ENCODE measurements at regions of chr19 and their contacts with region 1.

Region 1: GRCh38 chr19:1039646-1040475 is at the start of gene ABCA7:
- DNase-seq: peak; percentile 99
- H3K4me3 Mint-ChIP-seq: peak within 1 kb of the TSS; percentile 97
- H3K27ac Mint-ChIP-seq: peak within 1 kb of the TSS; percentile 90
- H3K4me1 Mint-ChIP-seq: peaks cover 65% of the 10 kb centered on the region
- H3K27me3 Mint-ChIP-seq: no peaks in the 10 kb centered on the region
- total RNA-seq, gene ABCA7: 92.7 to 95.1 TPM

Region 2: DNA sequence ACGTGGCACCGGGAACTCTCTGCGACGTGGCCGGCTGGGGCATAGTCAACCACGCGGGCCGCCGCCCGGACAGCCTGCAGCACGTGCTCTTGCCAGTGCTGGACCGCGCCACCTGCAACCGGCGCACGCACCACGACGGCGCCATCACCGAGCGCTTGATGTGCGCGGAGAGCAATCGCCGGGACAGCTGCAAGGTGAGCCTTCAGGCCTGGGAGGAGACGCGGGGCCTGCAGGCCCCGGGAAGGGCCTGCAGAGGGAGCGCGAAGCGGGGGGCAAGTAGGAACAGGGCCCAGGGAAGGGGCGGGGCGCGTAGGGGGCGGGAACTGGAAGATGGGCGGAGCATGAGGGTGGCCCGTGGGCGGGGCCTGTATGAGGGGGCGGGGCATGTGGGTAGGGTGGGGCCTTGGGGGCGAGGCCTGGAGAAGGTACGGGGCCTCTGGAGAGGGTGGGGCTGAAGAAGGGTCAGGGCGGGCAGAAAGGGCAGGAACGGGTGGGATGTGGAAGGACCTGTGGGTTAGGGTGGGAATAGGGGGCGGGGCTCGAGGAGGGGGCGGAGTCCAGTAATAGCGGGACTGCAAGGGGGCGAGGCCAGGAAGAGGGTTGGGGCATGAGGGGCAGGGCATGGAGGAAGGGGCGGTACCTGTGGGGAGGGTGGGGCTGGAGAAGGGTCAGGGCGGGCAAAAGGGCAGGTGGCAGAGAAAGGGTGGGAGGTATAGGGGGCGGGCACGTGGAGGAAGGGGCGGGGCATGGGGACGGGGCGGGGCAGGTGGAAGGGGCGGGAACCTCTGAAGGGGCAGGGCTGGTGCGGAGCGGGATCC is 177.9 kb before region 1 on chr19:
- CTCF ChIA-PET with region 1: no interaction called
- POLR2A ChIA-PET with region 1: no interaction called
- DNase-seq: peak; percentile 78
- H3K4me3 Mint-ChIP-seq: no peak overlapping the region
- H3K27ac Mint-ChIP-seq: peak overlapping the region; percentile 55
- H3K4me1 Mint-ChIP-seq: peaks cover 24% of the 10 kb centered on the region
- H3K27me3 Mint-ChIP-seq: peaks cover 12% of the 10 kb centered on the region

Region 3: GRCh38 chr19:1020868-1021425 is 18.9 kb before region 1 on chr19 and contains the start of gene TMEM259:
- CTCF ChIA-PET with region 1: interaction called, 34 read pairs
- POLR2A ChIA-PET with region 1: interaction called, 134 read pairs
- DNase-seq: peak; percentile 98
- H3K4me3 Mint-ChIP-seq: peak within 1 kb of the TSS; percentile 91
- H3K27ac Mint-ChIP-seq: peak within 1 kb of the TSS; percentile 92
- H3K4me1 Mint-ChIP-seq: peaks cover 47% of the 10 kb centered on the region
- H3K27me3 Mint-ChIP-seq: no peaks in the 10 kb centered on the region
- total RNA-seq, gene TMEM259: 181 TPM

Region 4: DNA sequence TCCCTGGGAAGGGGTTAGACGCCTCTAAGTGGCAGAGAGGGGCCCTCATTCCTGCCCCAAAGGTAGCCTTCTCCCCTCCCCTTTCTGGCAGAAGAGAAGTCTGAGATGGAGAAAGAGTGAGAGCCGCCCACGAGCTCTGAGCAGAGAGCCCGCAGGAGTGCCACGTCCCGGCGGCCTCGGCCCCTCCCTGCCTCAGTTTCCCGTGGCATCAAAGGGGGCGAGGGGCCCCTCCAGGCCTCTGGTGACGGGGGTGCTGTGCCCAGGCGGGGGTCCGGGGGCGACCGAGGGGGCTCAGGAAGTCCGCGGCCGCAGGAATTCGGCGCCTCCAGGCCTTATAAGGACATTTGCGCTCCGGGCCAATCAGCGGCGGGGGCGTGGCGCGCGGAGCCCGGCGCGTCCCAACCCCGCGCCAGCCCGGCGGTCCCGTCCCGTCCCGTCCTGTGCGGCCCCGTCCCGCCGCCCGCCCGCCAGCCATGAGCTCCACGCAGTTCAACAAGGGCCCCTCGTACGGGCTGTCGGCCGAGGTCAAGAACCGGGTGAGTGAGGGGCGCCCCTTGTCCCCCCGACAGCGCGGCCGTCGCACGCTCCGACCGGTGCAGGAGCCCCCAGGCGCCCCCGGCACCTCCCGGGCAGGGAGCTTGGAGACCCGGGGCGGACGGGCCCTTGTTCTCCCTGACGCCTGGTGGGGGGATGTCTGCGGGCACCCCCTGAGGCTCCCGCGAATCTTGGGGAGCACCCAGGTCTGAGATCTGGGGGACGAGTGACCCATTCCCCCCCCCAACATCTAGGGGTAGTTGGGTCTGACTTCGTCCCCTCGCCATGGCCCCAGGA is 13.5 kb before region 1 on chr19 and contains the start of gene CNN2:
- CTCF ChIA-PET with region 1: interaction called, 34 read pairs
- POLR2A ChIA-PET with region 1: interaction called, 134 read pairs
- DNase-seq: peak; percentile 78
- H3K4me3 Mint-ChIP-seq: peak within 1 kb of the TSS; percentile 97
- H3K27ac Mint-ChIP-seq: peak within 1 kb of the TSS; percentile 95
- H3K4me1 Mint-ChIP-seq: peaks cover 33% of the 10 kb centered on the region
- H3K27me3 Mint-ChIP-seq: no peaks in the 10 kb centered on the region
- total RNA-seq, gene CNN2: 513 to 519 TPM

Region 5: DNA sequence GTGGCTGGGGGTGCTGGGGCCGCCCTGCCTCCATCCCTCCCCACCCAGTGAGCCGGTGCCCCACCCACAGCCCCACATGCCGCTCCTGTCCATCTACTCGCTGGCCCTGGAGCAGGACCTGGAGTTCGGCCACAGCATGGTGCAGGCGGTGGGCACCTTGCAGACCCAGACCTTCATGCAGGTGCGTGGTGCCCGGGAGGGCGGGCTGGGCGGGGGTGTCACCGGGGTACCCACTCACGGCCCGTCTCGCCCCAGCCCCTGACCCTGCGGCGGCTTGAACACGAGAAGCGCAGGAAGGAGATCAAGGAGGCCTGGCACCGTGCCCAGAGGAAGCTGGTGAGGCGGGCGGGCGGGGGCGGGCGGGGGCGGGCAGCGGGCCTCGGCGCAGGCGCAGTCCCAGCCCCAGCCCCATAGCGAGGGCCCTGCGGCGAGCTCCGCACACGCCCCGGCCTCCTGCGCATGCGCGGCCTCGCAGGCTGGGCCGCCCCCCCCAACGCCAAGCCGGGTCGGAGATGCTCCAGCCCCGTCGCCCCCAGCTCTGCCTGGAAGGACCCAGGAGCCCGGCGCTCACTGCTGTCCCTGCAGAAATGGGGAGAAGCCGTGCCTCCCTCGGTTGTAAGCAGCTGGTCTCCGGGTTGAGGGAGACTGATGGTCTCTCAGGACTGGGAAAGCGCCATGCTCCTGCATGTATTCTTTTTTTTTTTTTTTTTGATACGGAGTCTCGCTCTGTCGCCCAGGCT is 34.9 kb after region 1 on chr19:
- CTCF ChIA-PET with region 1: no interaction called
- POLR2A ChIA-PET with region 1: interaction called, 43 read pairs
- DNase-seq: peak; percentile 91
- H3K4me3 Mint-ChIP-seq: peak overlapping the region; percentile 59
- H3K27ac Mint-ChIP-seq: peak overlapping the region; percentile 93
- H3K4me1 Mint-ChIP-seq: peaks cover 64% of the 10 kb centered on the region
- H3K27me3 Mint-ChIP-seq: no peaks in the 10 kb centered on the region

Region 6: DNA sequence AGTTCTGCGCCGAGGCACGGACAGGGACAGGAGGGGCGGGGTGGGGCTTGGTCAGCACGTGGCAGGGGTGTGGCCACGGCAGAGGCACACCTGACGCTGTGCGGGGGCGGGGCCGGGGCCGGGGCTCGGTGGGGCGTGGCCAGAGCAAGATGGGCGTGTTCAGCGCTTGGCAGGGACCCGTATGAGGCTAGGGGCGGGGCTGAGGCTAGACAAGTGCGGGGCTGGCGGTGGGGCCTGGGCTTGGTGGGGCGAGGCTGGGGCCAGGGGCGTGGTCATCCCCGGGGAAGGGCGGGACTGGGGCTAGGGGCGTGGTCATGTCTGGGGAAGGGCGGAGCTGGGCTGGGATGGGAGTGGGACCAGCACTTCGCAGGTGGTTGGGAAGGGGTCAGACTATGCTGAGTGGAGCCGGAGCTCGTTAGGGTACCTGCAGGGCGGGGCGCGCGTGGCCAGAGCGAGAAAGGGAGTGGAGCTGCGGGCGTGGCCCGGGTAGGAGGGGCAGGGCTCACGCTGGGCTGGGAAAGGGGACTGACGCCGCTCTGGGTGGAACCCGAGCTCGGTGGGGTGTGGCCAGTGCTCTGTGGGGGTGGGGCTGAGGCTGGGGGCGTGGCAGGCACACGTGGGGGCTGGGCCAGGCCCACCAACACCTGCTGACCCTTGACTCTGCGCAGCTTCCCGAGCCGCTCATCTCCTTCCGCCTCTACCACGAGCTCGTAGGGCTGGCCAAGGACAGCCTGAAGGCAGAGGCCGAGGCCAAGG is 42.5 kb after region 1 on chr19:
- CTCF ChIA-PET with region 1: no interaction called
- POLR2A ChIA-PET with region 1: interaction called, 43 read pairs
- DNase-seq: peak; percentile 92
- H3K4me3 Mint-ChIP-seq: no peak overlapping the region
- H3K27ac Mint-ChIP-seq: peak overlapping the region; percentile 72
- H3K4me1 Mint-ChIP-seq: peaks cover 63% of the 10 kb centered on the region
- H3K27me3 Mint-ChIP-seq: no peaks in the 10 kb centered on the region

Region 7: DNA sequence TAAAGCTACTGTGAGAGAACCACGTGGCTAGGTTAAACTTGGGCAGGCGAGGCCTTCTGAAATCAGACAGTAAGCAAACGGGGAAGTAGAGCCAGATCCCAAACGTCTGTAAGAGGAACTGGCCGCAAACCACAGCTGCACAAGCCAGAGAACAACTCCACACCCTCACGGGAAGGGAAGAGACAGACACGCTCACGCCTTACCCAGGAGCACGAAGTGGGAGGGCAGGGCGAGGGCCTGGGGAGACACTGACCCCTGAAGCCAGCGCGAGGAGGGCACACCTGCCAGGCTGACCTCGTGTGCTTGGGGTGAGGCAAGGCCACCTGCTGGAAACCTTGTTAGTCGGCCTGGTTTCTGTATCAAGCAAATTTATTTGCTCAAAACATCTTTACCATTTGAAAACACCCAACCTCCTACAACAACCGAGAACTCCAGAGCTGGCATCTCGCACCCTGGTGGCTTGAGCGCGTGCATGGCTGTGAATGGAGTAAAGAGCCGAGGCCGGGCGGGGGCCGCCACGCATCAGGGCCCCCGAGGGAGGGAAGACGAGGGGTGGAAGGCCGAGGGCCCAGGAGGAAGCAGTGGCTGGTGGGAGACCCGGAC is 48.1 kb after region 1 on chr19:
- CTCF ChIA-PET with region 1: no interaction called
- POLR2A ChIA-PET with region 1: interaction called, 19 read pairs
- DNase-seq: peak; percentile 54
- H3K4me3 Mint-ChIP-seq: peak overlapping the region; percentile 20
- H3K27ac Mint-ChIP-seq: peak overlapping the region; percentile 82
- H3K4me1 Mint-ChIP-seq: peaks cover 45% of the 10 kb centered on the region
- H3K27me3 Mint-ChIP-seq: no peaks in the 10 kb centered on the region

Measured in activated CD4-positive, alpha-beta memory T cell treated with anti-CD3 and anti-CD28 coated beads, Interleukin-2, amount 10 ng/mL, durations not matched to agents 7 days and 5 days (primary cell).